Ovary (tissue), 10 donors: ENCODE measurements at regions of chr4 and their contacts with region 1.

Region 1: GRCh38 chr4:186021461-186022167 is 47.3 kb upstream of the TLR3 start:
- DNase-seq: peak; percentile 23 to 54 (median 47)
- H3K4me3 ChIP-seq: peak overlapping the region; percentile 6
- H3K27ac ChIP-seq: no peak overlapping the region
- H3K4me1 ChIP-seq: peaks cover 3% of the 10 kb centered on the region
- H3K27me3 ChIP-seq: no peaks in the 10 kb centered on the region
- CTCF ChIP-seq: peak; percentile 66 to 68 (median 68)
- EP300 ChIP-seq: no peak
- POLR2A ChIP-seq: no peak

Region 2: DNA sequence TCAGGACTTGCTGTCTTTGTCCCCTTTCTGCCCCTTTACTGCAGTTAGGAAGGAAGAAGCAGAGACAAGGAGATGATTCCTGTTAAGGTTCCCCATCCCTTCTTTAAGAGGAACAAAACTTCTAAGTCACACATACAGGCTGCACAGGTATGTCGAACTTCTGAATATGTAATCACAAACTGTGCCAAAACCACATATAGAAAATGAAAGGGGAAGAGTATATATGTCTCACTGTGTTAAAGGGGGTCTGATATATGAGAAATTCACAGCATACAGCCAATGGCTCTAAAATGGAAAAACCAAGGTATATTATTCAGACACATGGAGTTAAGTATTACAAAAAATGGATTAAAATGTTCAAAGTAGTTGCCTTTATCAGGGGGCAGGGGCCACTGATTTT is 829.6 kb before region 1 on chr4:
- intact Hi-C with region 1: loop called in 1 of 4 experiments (anchors 10 kb)
- DNase-seq: no peak
- H3K4me3 ChIP-seq: no peak overlapping the region
- H3K27ac ChIP-seq: no peak overlapping the region
- H3K4me1 ChIP-seq: no peaks in the 10 kb centered on the region
- H3K27me3 ChIP-seq: no peaks in the 10 kb centered on the region
- CTCF ChIP-seq: no peak
- EP300 ChIP-seq: no peak
- POLR2A ChIP-seq: no peak

Region 3: GRCh38 chr4:185634066-185634652 is 387.5 kb before region 1 on chr4:
- intact Hi-C with region 1: loop called in 3 of 4 experiments (anchors 5 to 10 kb)
- DNase-seq: no peak
- H3K4me3 ChIP-seq: no peak overlapping the region
- H3K27ac ChIP-seq: no peak overlapping the region
- H3K4me1 ChIP-seq: no peaks in the 10 kb centered on the region
- H3K27me3 ChIP-seq: no peaks in the 10 kb centered on the region
- CTCF ChIP-seq: no peak
- EP300 ChIP-seq: no peak
- POLR2A ChIP-seq: no peak

Region 4: GRCh38 chr4:186078980-186079695 is 57.5 kb after region 1 on chr4:
- intact Hi-C with region 1: no loop called
- DNase-seq: no peak
- H3K4me3 ChIP-seq: no peak overlapping the region
- H3K27ac ChIP-seq: no peak overlapping the region
- H3K4me1 ChIP-seq: no peaks in the 10 kb centered on the region
- H3K27me3 ChIP-seq: no peaks in the 10 kb centered on the region
- CTCF ChIP-seq: no peak
- EP300 ChIP-seq: no peak
- POLR2A ChIP-seq: no peak